ENCODE measurements at regions of chr11 and their contacts with region 1.

Region 1: GRCh38 chr11:30333405-30333804 is 10.5 kb downstream of the ARL14EP start:
- DNase-seq: no peak
- H3K4me3 ChIP-seq: no peak overlapping the region
- H3K27me3 ChIP-seq: no peaks in the 10 kb centered on the region
- CTCF ChIP-seq: peak; percentile 48

Region 2: DNA sequence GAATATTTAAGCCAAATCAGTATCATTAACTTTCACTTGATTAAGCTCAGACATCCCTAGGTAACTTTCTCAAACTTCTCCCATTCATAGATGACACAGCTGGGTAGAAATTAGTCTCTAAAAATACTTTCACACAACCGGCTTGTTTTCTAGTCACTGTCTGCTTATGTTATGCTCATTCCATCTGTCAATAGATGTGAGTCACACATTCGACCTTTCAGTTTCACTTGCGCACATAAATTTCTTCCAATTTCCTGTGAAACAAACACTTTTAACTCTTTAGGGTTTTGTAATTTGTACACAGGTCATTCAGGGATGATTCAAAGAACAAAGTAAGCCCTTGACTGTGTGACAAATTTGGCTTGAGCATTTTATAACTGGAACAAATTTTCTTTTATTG is 1039.6 kb before region 1 on chr11:
- CTCF ChIA-PET with region 1: no interaction called
- POLR2A ChIA-PET with region 1: interaction called, 18 read pairs
- DNase-seq: no peak
- H3K4me3 ChIP-seq: no peak overlapping the region
- H3K27me3 ChIP-seq: no peaks in the 10 kb centered on the region
- CTCF ChIP-seq: no peak

Region 3: DNA sequence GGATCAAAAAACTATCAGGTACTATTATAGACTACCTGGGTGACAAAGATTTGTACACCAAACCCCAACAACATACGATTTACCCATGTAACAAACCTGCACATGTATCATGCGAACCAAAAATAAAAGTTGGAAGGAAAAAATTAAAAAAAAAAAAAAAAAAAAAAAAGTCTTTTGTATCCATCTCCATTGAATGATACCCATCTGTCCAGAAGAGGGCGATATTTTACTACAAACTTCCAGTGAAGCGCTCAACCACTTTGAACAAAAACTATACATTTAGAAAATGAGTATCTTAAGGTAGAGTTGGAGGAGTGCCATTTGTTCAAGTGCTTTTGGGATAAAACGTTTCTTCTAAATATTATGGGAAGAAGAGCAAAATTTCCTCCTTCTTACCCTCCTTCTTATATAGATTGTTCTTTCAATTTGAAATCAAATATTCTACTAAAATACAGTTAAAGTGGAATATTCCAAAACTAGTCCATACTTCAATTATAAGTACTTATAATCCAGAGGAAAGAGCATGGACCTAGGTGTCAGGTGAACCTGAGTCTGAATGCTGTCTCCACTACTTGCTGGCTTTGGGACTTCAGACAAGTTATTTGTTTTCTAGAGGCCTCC is 12.8 kb after region 1 on chr11:
- CTCF ChIA-PET with region 1: interaction called, 21 read pairs
- POLR2A ChIA-PET with region 1: no interaction called
- DNase-seq: no peak
- H3K4me3 ChIP-seq: no peak overlapping the region
- H3K27me3 ChIP-seq: no peaks in the 10 kb centered on the region
- CTCF ChIP-seq: peak; percentile 64

Measured in BJ (cell line).